Posterior vena cava (tissue), 2 donors: ENCODE measurements at regions of chr6 and their contacts with region 1.

Region 1: DNA sequence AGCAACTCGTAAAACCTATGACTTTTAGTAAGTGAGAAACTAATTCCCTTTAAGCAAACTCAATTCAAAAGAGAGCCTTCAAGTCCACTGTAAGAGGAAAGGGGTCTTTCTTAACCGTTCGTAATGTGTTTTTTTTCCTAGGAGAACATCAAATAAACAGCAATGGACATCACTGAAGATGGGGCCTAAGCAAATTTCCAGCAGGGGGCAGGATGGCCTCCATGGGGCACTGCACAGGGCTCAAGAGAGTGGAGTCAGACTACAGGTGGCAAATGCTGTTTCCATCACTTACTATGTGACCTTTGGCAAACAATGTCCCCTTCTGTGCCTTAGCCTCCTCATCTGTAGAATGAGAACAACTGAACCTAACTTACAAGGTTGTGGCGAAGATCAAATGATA is 88.7 kb downstream of the ARHGAP18 start:
- DNase-seq: no peak

Region 2: GRCh38 chr6:129481706-129482105 is 139.5 kb before region 1 on chr6:
- intact Hi-C with region 1: loop called in 1 of 2 experiments (anchors 5 kb)
- DNase-seq: no peak